Posterior cingulate gyrus (tissue), 11 donors: ENCODE measurements at regions of chr19 and their contacts with region 1.

Region 1: DNA sequence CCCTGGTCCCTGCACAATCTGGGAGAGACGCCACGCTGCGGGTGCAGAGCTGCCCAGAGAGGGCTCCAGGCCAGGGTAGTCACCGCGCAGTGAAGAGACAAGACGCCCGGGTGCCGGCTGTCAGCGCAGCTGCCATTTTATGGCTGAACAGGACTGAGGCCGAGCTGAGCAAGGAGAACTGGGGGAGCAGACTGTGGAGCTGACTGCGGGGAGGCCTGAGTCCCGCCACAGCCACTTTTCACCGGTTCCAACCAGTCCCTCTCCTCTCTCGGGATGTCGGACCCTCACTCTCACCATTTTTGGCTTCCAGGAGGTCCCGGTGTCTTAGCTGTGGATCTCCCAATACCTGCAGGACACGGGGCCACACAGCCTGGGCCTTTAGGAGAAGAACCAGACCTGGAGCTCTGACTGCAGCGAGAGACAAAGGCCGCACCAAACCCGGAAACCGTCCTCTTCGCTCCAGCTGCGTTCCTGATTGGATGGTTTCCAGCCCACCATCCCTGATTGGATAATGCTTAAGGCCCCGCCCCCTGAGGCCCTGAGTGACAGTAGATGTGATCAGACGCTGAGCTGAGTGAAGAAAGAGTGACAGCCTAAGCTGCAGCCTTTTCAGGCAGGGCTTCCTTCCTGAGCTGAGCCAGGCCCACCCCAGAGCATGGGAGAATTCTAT is at the start of gene ZNF626:
- DNase-seq: peak; percentile 92 to 99 (median 95)

Region 2: GRCh38 chr19:20513179-20513934 is 147.9 kb before region 1 on chr19:
- intact Hi-C with region 1: no loop called
- DNase-seq: no peak

Region 3: GRCh38 chr19:20612711-20613316 is 48.5 kb before region 1 on chr19:
- intact Hi-C with region 1: no loop called
- DNase-seq: no peak

Region 4: DNA sequence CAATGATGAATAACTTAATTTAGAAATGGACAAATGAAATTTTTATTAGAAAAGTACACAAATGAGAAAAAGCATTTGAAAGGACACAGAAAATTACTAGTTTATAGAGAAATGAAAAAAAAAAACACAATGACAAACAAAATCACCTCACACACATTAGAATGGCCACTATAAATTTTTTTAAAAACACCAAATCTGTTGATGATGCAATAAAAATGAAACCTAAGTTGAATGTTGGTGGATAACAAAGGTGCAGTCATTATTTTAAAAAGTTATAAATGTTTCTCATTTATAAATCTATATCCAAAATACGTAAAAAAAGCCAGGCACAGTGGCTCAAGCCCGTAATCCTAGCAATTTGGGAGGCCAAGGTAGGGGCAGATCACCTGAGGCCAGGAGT is 20.7 kb before region 1 on chr19:
- intact Hi-C with region 1: no loop called
- DNase-seq: peak in 1 of 10 donors; percentile 48

Region 5: DNA sequence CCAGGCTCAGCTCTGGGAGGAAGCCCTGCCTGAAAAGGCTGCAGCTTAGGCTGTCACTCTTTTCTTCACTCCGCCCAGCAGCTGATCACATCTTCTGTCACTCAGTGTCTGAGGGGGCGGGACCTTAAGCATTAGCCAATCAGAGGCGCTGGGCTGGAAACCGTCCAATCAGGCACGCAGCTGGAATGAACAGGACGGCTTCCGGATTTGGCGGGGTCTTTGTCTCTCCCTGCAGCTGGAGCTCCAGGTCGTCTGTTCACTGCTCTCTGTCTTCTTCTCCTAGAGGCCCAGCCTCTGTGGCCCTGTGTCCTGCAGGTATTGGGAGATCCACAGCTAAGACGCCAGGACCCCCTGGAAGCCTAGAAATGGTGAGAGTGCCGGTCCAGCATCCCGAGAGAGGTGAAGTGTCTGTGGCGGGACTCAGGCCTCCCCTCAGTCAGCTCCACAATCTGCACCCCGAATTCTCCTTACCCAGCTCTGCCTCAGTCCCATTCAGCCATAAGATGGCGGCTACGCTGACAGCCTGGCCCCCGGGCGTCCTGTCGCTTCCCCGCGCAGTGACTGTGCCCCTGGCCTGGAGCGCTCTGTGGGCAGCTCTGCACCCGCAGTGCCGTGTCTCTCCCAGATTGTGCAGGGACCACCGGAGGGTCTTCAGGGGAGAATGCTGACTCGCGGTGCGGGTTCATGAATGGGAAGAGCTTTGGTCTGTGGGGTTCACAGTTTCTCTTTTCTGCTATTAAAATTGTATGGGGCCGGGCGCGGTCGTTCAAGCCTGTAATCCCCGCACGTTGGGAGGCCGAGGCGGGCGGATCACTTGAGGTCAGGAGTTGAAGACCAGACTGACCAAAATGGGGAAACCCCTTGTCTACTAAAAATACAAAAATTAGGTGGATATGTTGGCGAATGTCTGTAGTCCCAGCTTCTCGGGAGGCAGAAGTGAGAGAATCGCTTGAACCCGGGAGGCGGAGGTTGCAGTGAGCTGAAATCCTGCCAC is 115.1 kb after region 1 on chr19 and contains the start of gene ZNF66:
- intact Hi-C with region 1: loop called (anchors 1 kb)
- DNase-seq: peak; percentile 93 to 100 (median 98)

Region 6: DNA sequence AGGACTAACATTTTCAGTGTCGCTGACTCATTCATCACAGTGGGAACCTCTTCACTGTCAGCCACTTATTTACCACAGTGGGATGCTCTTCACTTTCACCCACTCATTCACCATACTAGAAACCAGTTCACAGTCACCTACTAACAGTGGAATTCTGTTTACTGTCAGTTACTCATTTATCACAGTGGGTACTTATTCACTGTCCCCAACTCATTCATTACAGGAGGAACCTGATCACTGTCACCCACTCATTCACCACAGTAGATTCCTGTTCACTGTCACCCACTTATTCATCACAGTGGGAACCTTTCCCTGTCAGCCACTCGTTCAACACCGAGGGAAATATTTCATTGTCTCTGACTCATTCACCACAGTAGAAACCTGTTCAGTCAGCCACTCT is 251.7 kb after region 1 on chr19:
- intact Hi-C with region 1: no loop called
- DNase-seq: no peak

Region 7: GRCh38 chr19:21767065-21767800 is 1105.9 kb after region 1 on chr19 and contains the start of gene ZNF100:
- intact Hi-C with region 1: loop called (anchors 10 kb)
- DNase-seq: peak; percentile 84 to 98 (median 94)